Activated CD4-positive, alpha-beta T cell treated with anti-CD3 and anti-CD28 coated beads for 36 hours (primary cell): ENCODE measurements at regions of chr3 and their contacts with region 1.

Region 1: GRCh38 chr3:28840976-28841376 is 439.9 kb upstream of the RBMS3 start:
- DNase-seq: peak; percentile 72
- ATAC-seq: peak; percentile 98
- H3K4me3 Mint-ChIP-seq: no peak overlapping the region
- H3K27ac Mint-ChIP-seq: peak overlapping the region; percentile 70
- H3K4me1 Mint-ChIP-seq: peaks cover 21% of the 10 kb centered on the region
- H3K27me3 Mint-ChIP-seq: peaks cover 18% of the 10 kb centered on the region

Region 2: DNA sequence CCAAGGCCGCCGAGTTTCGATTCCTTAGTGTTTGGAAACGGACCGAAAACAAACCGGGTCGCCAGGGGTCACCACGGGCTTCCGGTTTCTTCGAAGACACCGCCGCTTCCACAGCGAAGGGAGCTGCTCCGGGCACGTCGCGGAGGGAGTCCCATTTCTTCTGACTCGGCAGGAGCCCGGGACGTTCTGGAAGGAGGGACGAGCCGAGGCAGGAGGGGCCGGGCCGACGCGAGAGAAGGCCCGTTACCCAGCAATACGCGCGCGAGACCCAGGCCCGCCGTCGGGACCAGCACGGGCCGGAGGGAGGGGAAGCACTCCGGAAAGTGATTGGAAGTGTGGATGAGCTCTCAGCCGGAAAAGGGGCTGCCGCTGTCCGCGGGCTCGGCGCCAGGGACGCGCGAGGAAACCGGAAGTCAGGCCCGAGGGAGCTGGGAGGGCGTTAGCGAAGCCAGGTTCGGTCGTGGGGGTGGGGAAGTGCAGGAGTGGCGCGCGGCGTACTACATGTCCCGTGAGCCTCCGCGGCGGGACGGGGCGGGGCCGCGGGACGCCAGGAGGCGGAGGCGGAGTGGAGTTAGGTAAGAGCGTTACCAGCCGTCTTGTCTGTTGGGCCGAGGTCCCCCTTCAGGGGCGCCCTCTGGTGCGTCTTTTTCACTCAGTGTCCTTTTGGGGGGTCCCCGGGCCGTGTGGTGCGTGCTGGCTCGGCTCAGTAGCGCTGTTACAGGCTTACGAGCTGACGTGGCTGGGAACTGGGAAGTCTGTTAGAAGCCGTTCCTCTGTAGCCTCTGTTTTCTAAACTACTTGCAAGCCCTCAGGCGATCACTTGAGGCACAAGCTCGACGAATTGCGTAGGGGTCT is 492.1 kb before region 1 on chr3 and contains the starts of genes AZI2 and ZCWPW2:
- CTCF ChIA-PET with region 1: no interaction called
- POLR2A ChIA-PET with region 1: no interaction called
- intact Hi-C with region 1: loop called in 1 of 2 experiments (anchors 2 kb)
- DNase-seq: peak; percentile 96
- ATAC-seq: peak; percentile 87
- H3K4me3 Mint-ChIP-seq: peak within 1 kb of the TSS; percentile 98
- H3K27ac Mint-ChIP-seq: peak within 1 kb of the TSS; percentile 98
- H3K4me1 Mint-ChIP-seq: peaks cover 43% of the 10 kb centered on the region
- H3K27me3 Mint-ChIP-seq: no peaks in the 10 kb centered on the region
- total RNA-seq, gene AZI2: 52.3 to 78.8 TPM
- total RNA-seq, gene ZCWPW2: 0.37 to 0.39 TPM

Region 3: DNA sequence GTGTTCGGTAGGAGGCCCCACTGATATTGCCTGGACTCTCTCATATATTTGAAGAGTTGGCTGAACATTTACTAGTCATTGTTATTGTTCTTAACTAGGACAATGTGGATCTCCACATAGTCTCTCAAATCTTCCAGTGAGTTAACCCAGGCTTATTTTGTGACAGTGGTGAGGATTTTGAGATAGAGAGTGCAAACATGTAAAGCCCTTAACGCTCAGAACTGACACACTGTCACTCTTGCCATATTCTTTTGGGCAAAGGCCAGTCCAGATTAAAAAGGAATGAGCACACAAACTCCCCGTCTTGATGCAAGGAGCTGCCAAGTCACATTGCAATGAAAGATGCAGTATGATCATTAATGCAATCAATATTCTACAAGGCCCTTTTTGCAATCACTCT is 60.5 kb before region 1 on chr3:
- CTCF ChIA-PET with region 1: no interaction called
- POLR2A ChIA-PET with region 1: no interaction called
- intact Hi-C with region 1: loop called in 1 of 2 experiments (anchors 10 kb)
- DNase-seq: no peak
- ATAC-seq: no peak
- H3K4me3 Mint-ChIP-seq: no peak overlapping the region
- H3K27ac Mint-ChIP-seq: no peak overlapping the region
- H3K4me1 Mint-ChIP-seq: no peaks in the 10 kb centered on the region
- H3K27me3 Mint-ChIP-seq: peaks cover 2% of the 10 kb centered on the region

Region 4: GRCh38 chr3:28924744-28925360 is 83.9 kb after region 1 on chr3:
- CTCF ChIA-PET with region 1: no interaction called
- POLR2A ChIA-PET with region 1: no interaction called
- intact Hi-C with region 1: loop called in 1 of 2 experiments (anchors 5 kb)
- DNase-seq: no peak
- ATAC-seq: peak; percentile 64
- H3K4me3 Mint-ChIP-seq: no peak overlapping the region
- H3K27ac Mint-ChIP-seq: no peak overlapping the region
- H3K4me1 Mint-ChIP-seq: no peaks in the 10 kb centered on the region
- H3K27me3 Mint-ChIP-seq: no peaks in the 10 kb centered on the region

Region 5: DNA sequence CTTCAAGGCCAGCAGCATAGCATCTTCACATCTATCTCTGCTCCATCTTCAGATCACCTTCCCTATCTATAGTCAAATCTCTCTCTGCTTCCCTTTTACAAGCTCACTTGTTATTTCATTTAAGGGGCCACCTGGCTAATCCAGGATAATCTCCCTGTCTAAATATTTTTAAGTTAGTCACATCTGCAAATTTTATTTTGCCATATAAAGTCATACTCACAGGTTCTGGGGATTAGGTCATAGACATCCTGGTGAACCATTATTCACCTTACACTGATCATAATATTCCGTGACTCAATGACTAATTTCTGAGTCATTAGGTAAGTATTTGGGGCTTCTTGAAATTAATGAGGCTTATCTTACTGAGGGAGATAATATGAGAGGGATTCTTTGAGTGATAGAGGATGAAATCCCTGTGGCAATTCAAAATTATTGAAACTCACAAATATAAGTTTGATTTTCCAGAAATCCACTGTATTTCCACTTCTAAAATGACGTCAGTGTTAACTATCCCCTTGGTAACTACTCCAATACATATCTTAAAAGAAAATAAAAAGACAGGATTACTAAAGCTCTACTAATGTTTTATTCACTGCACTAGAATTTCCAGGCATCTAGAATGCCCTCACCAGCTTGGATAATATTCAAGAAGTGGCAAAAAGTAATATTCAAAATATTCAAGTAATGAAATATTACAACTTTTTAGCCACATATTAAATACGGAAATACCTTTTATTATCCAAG is 346.2 kb after region 1 on chr3:
- CTCF ChIA-PET with region 1: no interaction called
- POLR2A ChIA-PET with region 1: no interaction called
- intact Hi-C with region 1: loop called in 1 of 2 experiments (anchors 1 kb)
- DNase-seq: no peak
- ATAC-seq: peak; percentile 43
- H3K4me3 Mint-ChIP-seq: no peak overlapping the region
- H3K27ac Mint-ChIP-seq: peak overlapping the region; percentile 64
- H3K4me1 Mint-ChIP-seq: peaks cover 22% of the 10 kb centered on the region
- H3K27me3 Mint-ChIP-seq: no peaks in the 10 kb centered on the region

Region 6: GRCh38 chr3:29280404-29281093 is 439.6 kb after region 1 on chr3 and contains the start of gene RBMS3:
- CTCF ChIA-PET with region 1: no interaction called
- POLR2A ChIA-PET with region 1: no interaction called
- intact Hi-C with region 1: loop called in 1 of 2 experiments (anchors 2 kb)
- DNase-seq: peak; percentile 48
- ATAC-seq: peak; percentile 14
- H3K4me3 Mint-ChIP-seq: peak within 1 kb of the TSS; percentile 70
- H3K27ac Mint-ChIP-seq: peak within 1 kb of the TSS; percentile 73
- H3K4me1 Mint-ChIP-seq: peaks cover 35% of the 10 kb centered on the region
- H3K27me3 Mint-ChIP-seq: peaks cover 13% of the 10 kb centered on the region
- total RNA-seq, gene RBMS3: 1.5 to 2.0 TPM

Region 7: DNA sequence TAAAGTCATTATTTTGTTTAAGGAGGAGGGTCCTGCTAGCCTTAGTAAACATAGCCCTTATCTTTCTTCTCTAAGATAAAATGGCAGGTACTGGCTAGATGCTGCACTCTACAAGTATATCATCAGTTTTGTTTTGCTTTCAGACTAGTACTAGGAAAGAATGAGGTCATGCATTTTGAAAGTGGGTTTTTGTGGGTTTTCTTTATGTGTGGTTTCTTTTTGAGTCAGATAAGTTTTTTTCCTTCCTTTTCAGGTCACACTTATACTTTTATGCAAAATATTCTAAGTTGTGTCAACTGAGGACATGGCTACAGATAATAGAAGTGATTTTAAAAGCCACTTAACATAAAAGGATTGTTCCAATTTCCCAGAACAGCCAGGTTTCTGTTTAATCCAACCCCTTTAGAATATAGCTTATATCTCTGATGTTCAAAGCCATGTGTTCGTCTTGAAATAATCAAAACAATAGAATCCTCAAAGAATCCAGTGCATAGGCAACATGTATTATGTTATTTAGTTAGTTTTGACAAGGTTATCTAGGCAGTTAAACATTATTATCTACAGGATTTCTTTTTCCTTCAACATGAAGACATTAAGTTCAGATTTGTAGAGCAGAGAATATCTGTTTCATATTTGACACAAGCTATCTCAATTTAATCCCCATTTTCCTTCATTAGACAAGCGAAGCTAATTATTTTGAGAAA is 846.1 kb after region 1 on chr3:
- CTCF ChIA-PET with region 1: no interaction called
- POLR2A ChIA-PET with region 1: no interaction called
- intact Hi-C with region 1: loop called in 1 of 2 experiments (anchors 2 kb)
- DNase-seq: no peak
- ATAC-seq: peak; percentile 92
- H3K4me3 Mint-ChIP-seq: no peak overlapping the region
- H3K27ac Mint-ChIP-seq: no peak overlapping the region
- H3K4me1 Mint-ChIP-seq: peaks cover 8% of the 10 kb centered on the region
- H3K27me3 Mint-ChIP-seq: peaks cover 9% of the 10 kb centered on the region